Transverse colon (tissue), 4 donors: ENCODE measurements at regions of chr4 and their contacts with region 1.

Region 1: DNA sequence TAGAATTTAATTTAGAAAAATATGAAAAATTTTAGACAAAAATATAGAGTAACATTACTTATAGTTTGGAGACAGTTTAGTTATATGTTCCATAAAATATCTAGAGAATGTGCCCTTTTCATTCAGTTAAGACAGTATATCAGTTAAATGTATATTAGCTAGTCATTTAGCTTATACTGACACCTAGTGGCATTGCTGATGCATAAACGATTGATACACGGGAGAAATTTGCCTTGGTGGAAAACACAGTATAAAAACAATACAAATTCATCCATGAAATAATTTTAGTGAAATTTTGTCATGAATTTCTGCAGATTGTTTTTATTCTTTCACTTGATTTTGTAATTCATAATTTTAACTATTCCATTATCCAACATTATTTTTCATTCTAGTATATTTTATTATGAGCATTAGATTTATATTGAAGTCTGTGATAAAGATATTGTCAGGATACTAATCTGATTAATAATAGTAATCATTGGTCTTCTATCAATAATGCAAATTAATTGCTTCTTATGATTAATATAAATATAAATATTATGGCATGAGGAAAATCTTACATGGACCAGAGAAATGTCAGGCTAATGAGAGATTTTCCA is 219.0 kb downstream of the TLL1 start:
- DNase-seq: no peak
- H3K4me3 ChIP-seq: no peak overlapping the region
- H3K27ac ChIP-seq: no peak overlapping the region
- H3K4me1 ChIP-seq: no peaks in the 10 kb centered on the region
- H3K27me3 ChIP-seq: no peaks in the 10 kb centered on the region
- CTCF ChIP-seq: peak; percentile 58 to 64 (median 62)
- EP300 ChIP-seq: no peak
- POLR2A ChIP-seq: no peak

Region 2: GRCh38 chr4:165493359-165493758 is 598.7 kb before region 1 on chr4:
- in situ Hi-C with region 1: loop called in 1 of 4 experiments (anchors 10 kb)
- intact Hi-C with region 1: no loop called
- DNase-seq: peak; percentile 70
- H3K4me3 ChIP-seq: no peak overlapping the region
- H3K27ac ChIP-seq: no peak overlapping the region
- H3K4me1 ChIP-seq: peaks cover 0 to 15% (median 7%) of the 10 kb centered on the region in 4 donors
- H3K27me3 ChIP-seq: no peaks in the 10 kb centered on the region
- CTCF ChIP-seq: peak; percentile 41 to 63 (median 59)
- EP300 ChIP-seq: no peak
- POLR2A ChIP-seq: no peak

Region 3: GRCh38 chr4:165537028-165537648 is 554.9 kb before region 1 on chr4:
- in situ Hi-C with region 1: loop called (anchors 10 to 25 kb)
- intact Hi-C with region 1: loop called (anchors 2 kb)
- DNase-seq: no peak
- H3K4me3 ChIP-seq: no peak overlapping the region
- H3K27ac ChIP-seq: no peak overlapping the region
- H3K4me1 ChIP-seq: peaks cover 0 to 3% (median 0%) of the 10 kb centered on the region in 4 donors
- H3K27me3 ChIP-seq: no peaks in the 10 kb centered on the region
- CTCF ChIP-seq: peak; percentile 62 to 76 (median 68)
- EP300 ChIP-seq: no peak
- POLR2A ChIP-seq: no peak

Region 4: GRCh38 chr4:166078955-166079354 is 13.1 kb before region 1 on chr4:
- in situ Hi-C with region 1: no loop called
- intact Hi-C with region 1: no loop called
- DNase-seq: no peak
- H3K4me3 ChIP-seq: no peak overlapping the region
- H3K27ac ChIP-seq: no peak overlapping the region
- H3K4me1 ChIP-seq: no peaks in the 10 kb centered on the region
- H3K27me3 ChIP-seq: no peaks in the 10 kb centered on the region
- CTCF ChIP-seq: no peak
- EP300 ChIP-seq: no peak
- POLR2A ChIP-seq: no peak